ENCODE measurements at regions of chr2 and their contacts with region 1.

Region 1: DNA sequence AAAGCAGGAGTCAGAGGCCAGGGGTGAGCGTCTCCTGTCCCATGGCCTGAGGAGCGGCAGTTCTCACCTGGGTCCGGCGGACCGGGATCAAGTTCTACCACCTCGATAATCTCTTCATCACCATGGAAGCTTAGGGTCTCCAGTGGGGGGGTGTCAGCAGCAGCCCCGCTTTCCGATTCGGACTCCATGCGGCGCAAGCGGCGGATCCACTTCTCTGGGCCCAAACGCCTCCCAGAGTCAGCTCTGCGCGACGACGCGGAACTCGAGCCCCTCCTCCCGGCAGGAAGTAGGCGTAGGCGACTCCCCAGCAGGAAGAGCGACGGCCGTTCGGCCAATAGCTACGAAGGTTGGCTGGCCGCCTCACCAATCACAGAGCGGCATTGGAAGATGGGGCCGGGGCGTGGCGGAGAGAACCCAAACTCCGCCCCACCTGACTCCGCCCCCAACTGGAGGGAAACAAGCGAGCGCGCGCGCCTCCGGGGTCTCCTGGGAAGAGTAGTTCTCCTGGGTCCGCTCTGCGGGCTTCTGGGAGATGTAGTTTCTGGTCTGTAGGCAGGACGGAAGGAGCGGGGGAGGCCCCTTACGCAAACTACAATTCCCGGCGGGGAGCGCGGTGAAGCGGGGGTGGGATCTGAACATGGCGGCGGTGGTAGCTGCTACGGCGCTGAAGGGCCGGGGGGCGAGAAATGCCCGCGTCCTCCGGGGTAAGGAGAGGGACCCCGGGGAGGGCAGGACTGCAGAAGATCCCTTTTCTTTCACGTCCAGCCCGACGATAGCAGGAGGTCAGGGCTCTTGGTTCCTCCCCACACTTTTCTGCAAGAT is at the starts of genes AAMP and PNKD:
- DNase-seq: peak; percentile 100
- H3K4me3 ChIP-seq: peak within 1 kb of the TSS; percentile 80 to 91
- H3K4me3 Mint-ChIP-seq: peak within 1 kb of the TSS; percentile 87 to 96 (median 94)
- H3K27ac ChIP-seq: peak within 1 kb of the TSS; percentile 84
- H3K27ac Mint-ChIP-seq: peak within 1 kb of the TSS; percentile 92 to 96 (median 93)
- H3K4me1 ChIP-seq: peaks cover 34% of the 10 kb centered on the region
- H3K4me1 Mint-ChIP-seq: peaks cover 34 to 60% (median 48%) of the 10 kb centered on the region in 4 donors
- H3K27me3 ChIP-seq: no peaks in the 10 kb centered on the region
- H3K27me3 Mint-ChIP-seq: no peaks in the 10 kb centered on the region
- total RNA-seq, gene AAMP: 66.2 to 66.3 TPM
- total RNA-seq, gene PNKD: 31.1 to 33.6 TPM

Region 2: DNA sequence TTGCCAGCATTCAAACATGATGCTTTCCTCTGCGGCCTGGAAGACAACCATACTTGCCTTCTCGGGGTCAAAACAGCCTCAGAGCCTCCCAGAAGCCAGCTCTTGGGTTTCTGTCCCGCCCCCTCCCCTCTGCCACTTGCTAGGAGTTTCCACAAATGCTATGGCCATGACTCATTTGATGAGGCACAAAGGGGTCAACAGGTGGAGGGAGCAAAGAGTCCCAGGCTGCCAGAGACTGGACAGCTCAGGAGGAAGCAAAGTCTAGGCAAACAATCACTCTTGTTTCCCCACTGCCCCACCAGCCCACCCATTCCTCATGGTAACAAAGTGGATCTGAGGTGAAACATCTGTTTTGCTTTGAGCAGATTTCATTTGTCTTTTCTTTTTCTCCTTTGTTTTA is 818.4 kb before region 1 on chr2:
- CTCF ChIA-PET with region 1: no interaction called
- POLR2A ChIA-PET with region 1: no interaction called
- intact Hi-C with region 1: no loop called
- DNase-seq: no peak
- H3K4me3 ChIP-seq: no peak overlapping the region
- H3K4me3 Mint-ChIP-seq: no peak overlapping the region
- H3K27ac ChIP-seq: no peak overlapping the region
- H3K27ac Mint-ChIP-seq: no peak overlapping the region
- H3K4me1 ChIP-seq: no peaks in the 10 kb centered on the region
- H3K4me1 Mint-ChIP-seq: no peaks in the 10 kb centered on the region
- H3K27me3 ChIP-seq: no peaks in the 10 kb centered on the region
- H3K27me3 Mint-ChIP-seq: peaks cover 2% of the 10 kb centered on the region in 2 donors

Region 3: DNA sequence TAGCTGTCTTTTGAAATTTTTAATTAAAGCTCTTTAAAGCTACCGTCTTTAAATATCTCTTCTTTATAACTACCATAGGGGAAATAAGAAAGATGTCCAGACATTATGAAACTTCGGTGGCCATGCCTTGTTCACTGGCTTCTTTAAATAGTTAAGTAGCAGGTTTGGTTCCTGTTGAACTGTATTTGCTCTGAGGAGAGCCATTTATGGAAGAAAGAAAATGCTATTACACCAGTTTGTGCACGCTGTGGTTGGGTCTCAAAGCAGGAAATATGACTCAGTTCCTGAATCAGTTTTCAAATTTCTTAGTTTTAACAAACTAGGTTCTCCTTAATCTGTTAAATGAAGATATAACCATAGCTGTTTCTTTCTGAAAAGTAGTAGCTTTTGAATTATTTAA is 40.9 kb before region 1 on chr2:
- CTCF ChIA-PET with region 1: interaction called, 7 read pairs
- POLR2A ChIA-PET with region 1: interaction called, 17 read pairs
- intact Hi-C with region 1: no loop called
- DNase-seq: peak; percentile 46 to 75 (median 52)
- H3K4me3 ChIP-seq: no peak overlapping the region
- H3K4me3 Mint-ChIP-seq: peak overlapping the region; percentile 42 to 88 (median 70)
- H3K27ac ChIP-seq: peak overlapping the region; percentile 35
- H3K27ac Mint-ChIP-seq: peak overlapping the region; percentile 70 to 95 (median 90)
- H3K4me1 ChIP-seq: peaks cover 80% of the 10 kb centered on the region
- H3K4me1 Mint-ChIP-seq: peaks cover 50 to 86% (median 70%) of the 10 kb centered on the region in 4 donors
- H3K27me3 ChIP-seq: no peaks in the 10 kb centered on the region
- H3K27me3 Mint-ChIP-seq: no peaks in the 10 kb centered on the region

Region 4: DNA sequence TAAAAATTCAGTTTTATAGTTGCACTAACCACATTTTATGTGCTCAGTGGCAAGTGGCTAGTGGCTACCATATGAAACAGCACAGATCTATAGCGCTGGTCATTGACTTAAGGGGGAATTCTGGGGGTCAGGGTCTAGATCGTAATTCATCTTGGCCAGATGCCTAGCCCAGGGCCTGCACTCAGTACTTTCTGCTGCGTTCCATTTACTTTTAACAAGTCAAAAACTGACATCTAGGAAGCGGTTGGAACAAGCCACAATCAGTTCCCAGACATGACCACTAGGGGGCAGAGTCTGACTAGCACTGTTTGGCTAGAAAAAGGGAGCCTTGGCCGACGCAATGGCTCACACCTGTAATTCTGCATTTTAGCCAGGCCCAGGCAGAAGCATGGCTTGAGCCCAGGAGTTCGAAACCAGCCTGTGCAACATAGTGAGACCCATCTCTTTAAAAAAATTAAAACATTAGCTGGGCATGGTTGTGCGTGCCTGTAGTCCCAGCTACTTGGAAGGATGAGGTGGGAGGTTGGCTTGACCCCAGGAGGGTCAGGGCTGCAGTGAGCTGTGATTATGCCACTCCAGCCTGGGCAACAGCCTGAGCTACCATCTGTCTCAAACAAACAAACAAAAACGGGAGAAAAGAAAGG is 31.2 kb after region 1 on chr2:
- CTCF ChIA-PET with region 1: interaction called, 446 read pairs
- POLR2A ChIA-PET with region 1: interaction called, 176 read pairs
- intact Hi-C with region 1: loop called (anchors 1 kb)
- DNase-seq: peak; percentile 83 to 87 (median 84)
- H3K4me3 ChIP-seq: no peak overlapping the region
- H3K4me3 Mint-ChIP-seq: no peak overlapping the region
- H3K27ac ChIP-seq: no peak overlapping the region
- H3K27ac Mint-ChIP-seq: peak overlapping the region; percentile 7 to 91 (median 39)
- H3K4me1 ChIP-seq: peaks cover 8% of the 10 kb centered on the region
- H3K4me1 Mint-ChIP-seq: peaks cover 3 to 8% (median 5%) of the 10 kb centered on the region in 4 donors
- H3K27me3 ChIP-seq: no peaks in the 10 kb centered on the region
- H3K27me3 Mint-ChIP-seq: no peaks in the 10 kb centered on the region

Region 5: GRCh38 chr2:218406209-218406948 is 136.3 kb after region 1 on chr2:
- CTCF ChIA-PET with region 1: interaction called, 4 read pairs
- POLR2A ChIA-PET with region 1: interaction called, 8 read pairs
- intact Hi-C with region 1: loop called (anchors 1 kb)
- DNase-seq: peak; percentile 88 to 92 (median 91)
- H3K4me3 ChIP-seq: peak overlapping the region; percentile 34 to 63
- H3K4me3 Mint-ChIP-seq: peak overlapping the region; percentile 80 to 91 (median 87)
- H3K27ac ChIP-seq: peak overlapping the region; percentile 71
- H3K27ac Mint-ChIP-seq: peak overlapping the region; percentile 93 to 100 (median 96)
- H3K4me1 ChIP-seq: peaks cover 62% of the 10 kb centered on the region
- H3K4me1 Mint-ChIP-seq: peaks cover 32 to 67% (median 50%) of the 10 kb centered on the region in 4 donors
- H3K27me3 ChIP-seq: no peaks in the 10 kb centered on the region
- H3K27me3 Mint-ChIP-seq: no peaks in the 10 kb centered on the region

Region 6: DNA sequence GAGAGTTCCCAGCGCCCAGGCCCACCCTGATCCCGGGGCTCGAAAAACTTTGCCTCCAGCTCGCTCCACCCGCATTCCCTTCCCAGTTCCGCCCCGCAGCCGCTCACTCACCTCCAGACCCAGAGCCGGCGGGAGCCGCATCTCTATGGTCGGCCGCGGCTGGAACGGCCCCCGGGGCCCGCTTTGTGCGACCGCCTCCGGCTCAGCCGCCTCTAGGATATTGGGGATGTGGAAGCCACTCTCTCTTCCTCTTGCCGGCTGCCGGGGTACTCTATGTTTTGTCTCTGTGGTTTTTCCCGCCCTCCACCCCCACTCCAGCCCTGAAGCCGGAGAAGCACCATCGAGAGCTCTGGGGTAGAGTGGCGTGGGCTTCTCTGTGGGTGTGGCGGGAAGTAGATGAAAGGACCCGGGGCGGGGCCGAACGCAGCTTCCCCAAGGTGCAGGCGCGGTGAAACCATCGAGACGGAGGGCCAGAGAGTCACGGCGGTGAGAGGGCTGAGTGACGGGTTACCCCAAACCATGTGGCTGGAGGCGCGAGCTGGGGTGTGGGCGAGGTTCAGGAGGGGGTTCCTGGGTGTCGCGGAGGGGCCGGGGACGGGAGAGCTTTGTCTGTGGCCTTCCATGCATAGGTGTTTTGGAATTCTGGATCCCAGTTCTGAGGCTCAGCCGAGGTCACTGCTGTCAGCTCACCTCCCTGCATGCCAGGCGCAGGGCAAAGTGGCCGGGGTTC is 389.3 kb after region 1 on chr2 and contains the starts of genes BCS1L and ZNF142:
- CTCF ChIA-PET with region 1: no interaction called
- POLR2A ChIA-PET with region 1: interaction called, 5 read pairs
- intact Hi-C with region 1: loop called (anchors 2 kb)
- DNase-seq: peak; percentile 90 to 94 (median 92)
- H3K4me3 ChIP-seq: peak within 1 kb of the TSS; percentile 50 to 78
- H3K4me3 Mint-ChIP-seq: peak within 1 kb of the TSS; percentile 91 to 100 (median 93)
- H3K27ac ChIP-seq: peak within 1 kb of the TSS; percentile 71
- H3K27ac Mint-ChIP-seq: peak within 1 kb of the TSS; percentile 92 to 98 (median 94)
- H3K4me1 ChIP-seq: peaks cover 28% of the 10 kb centered on the region
- H3K4me1 Mint-ChIP-seq: peaks cover 17 to 37% (median 31%) of the 10 kb centered on the region in 4 donors
- H3K27me3 ChIP-seq: no peaks in the 10 kb centered on the region
- H3K27me3 Mint-ChIP-seq: no peaks in the 10 kb centered on the region
- total RNA-seq, gene BCS1L: 53.0 to 57.2 TPM
- total RNA-seq, gene ZNF142: 44.4 to 54.5 TPM